GM13976 (cell line): ENCODE measurements at regions of chr7 and their contacts with region 1.

Region 1: DNA sequence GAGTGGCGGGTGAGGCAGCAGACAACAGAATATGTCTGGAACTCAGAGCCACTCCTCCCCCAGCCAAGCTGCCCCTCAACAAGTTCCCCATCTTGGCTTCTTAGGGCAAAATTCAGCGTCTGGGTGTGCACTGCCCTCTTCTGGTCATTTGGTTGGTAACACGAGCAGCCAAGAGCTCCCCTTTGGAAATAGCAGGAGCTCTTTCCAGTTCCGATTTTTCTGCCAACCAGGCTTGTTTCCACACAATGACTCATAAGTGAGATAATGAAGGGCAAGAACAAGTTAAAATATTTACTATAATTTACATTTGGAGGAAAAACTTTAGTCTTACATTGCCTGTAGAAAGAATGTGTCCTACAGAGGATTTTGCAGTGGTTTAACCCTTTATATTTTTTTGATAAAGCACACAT is 70.5 kb downstream of the ADCYAP1R1 start:
- DNase-seq: peak; percentile 59
- CTCF ChIP-seq: peak; percentile 68

Region 2: GRCh38 chr7:30379131-30379530 is 743.5 kb before region 1 on chr7:
- in situ Hi-C with region 1: no loop called
- DNase-seq: no peak
- CTCF ChIP-seq: no peak

Region 3: GRCh38 chr7:30800785-30801252 is 321.8 kb before region 1 on chr7:
- in situ Hi-C with region 1: loop called (anchors 10 kb)
- DNase-seq: peak; percentile 76
- CTCF ChIP-seq: peak; percentile 75

Region 4: GRCh38 chr7:30983042-30983913 is 139.4 kb before region 1 on chr7:
- in situ Hi-C with region 1: loop called (anchors 5 kb)
- DNase-seq: peak; percentile 86
- CTCF ChIP-seq: peak; percentile 99

Region 5: GRCh38 chr7:31735991-31736982 is 613.6 kb after region 1 on chr7:
- in situ Hi-C with region 1: loop called (anchors 10 kb)
- DNase-seq: peak; percentile 41
- CTCF ChIP-seq: peak; percentile 64

Region 6: DNA sequence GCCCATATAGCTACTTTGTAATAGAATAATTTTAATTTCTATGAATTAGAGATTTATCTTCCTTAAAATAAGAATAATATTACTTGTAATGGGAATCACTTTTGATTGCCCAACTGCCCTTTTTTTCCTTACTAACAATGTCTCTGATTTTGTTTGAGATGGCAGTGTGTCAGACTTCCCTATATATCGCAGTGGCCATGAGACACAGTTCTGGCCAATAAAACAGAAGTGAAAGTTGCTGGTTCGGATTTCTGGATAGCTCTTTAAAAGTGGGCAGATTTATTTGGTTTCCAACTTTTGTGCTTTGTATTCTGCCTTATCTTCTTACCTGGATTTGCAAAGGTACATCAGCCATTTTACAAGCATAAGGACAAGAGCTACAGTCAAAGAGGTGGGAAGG is 734.5 kb after region 1 on chr7:
- in situ Hi-C with region 1: no loop called
- DNase-seq: no peak
- CTCF ChIP-seq: no peak